ENCODE measurements at regions of chr9 and their contacts with region 1.

Region 1: GRCh38 chr9:14080959-14081542 is 232.9 kb downstream of the NFIB start:
- DNase-seq: no peak
- H3K4me3 ChIP-seq: no peak overlapping the region
- H3K27ac ChIP-seq: no peak overlapping the region
- H3K4me1 ChIP-seq: peaks cover 0 to 8% (median 2%) of the 10 kb centered on the region in 4 donors
- H3K27me3 ChIP-seq: no peaks in the 10 kb centered on the region
- CTCF ChIP-seq: no peak

Region 2: DNA sequence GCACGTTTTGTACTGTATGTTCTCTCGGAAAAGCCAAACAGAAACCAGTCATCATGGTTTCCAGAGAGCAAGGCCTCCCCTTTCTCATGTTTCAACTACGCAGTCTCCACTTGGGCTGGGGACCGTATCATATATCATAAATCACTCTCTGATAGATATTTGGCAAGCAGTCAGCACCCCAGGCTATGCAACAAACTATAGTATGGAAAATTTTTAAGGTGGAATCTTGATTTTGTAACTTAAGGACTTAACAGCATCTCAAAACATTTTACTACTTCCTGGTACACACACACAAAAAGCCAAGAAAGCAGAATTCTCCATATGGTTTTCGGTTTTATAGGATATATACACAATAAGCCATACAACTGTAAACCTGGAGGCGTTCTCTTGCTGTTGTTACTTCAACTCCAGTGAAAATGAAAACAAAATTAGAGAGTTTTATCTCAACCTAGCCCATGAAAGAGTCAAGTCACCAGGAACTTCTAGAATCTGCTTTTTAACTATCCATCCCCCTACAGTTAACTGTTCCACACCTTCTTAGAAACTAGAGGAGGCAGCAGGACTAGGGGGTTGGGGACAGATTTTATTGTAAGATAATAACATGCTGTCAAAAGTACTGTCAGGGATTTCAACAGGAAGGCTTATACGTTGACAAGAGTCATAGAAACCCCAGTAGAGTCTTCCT is 50.5 kb before region 1 on chr9:
- intact Hi-C with region 1: loop called (anchors 10 kb)
- DNase-seq: no peak
- H3K4me3 ChIP-seq: peak overlapping the region; percentile 19 to 30
- H3K27ac ChIP-seq: peak overlapping the region; percentile 74 to 80
- H3K4me1 ChIP-seq: peaks cover 0 to 59% (median 28%) of the 10 kb centered on the region in 4 donors
- H3K27me3 ChIP-seq: no peaks in the 10 kb centered on the region
- CTCF ChIP-seq: no peak

Region 3: DNA sequence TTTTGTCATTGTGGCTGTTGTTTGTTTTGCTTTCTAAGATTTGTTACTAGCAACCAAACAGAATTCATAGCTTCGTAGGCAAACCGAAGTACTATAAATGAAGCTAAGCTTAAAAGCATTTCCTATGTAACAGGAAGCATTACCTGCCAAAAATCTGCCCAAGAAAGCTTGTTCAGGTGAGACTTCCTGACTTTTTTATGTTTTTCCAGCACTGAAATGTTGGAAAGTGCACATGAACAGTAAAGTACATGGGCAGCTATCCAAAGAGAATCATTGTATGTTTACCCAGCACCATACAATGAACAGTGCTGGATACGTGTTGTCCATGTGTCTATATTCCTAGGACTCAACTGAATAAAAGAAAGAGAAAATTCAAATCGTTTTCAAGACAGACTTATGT is 14.2 kb before region 1 on chr9:
- intact Hi-C with region 1: loop called (anchors 1 kb)
- DNase-seq: no peak
- H3K4me3 ChIP-seq: no peak overlapping the region
- H3K27ac ChIP-seq: no peak overlapping the region
- H3K4me1 ChIP-seq: no peaks in the 10 kb centered on the region
- H3K27me3 ChIP-seq: no peaks in the 10 kb centered on the region
- CTCF ChIP-seq: no peak